Activated B cell treated with CpG ODN at 0.5 μM for 24 hours (primary cell): ENCODE measurements at regions of chr2 and their contacts with region 1.

Region 1: DNA sequence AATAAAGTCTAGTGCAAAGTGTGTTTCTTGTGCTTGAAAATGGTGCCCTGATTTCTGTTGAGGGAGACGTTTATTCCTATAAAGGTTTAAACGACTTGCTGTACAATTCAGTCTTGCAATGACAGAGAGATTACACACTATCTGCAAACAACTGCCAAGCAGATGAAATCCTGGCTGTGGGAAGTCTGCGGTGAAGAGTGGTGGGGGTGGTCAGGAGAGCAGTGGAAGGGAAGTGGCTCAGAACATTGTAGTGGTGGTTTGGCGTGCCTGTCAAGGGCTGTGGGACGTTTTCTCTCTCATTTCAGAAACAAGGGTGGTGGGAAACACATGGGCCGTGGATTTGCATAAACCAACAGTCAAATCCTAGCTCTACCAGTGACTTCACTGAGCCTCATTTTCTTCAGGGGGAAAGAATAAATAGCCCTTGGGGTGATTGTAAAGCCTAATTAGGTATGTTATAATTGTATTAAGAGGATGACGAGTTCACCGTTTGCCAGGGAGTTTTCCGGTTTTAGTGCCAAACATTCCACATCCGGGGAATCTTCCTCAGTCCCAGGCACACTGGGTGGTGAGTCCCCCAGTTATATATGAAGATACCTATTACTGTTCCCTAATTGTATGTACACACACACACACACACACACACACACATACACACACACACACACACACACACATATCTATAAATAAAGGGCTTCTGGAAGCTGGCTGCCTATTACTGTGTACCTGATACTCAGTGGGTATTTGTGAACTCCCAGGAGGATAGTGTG is 115.0 kb downstream of the SPTBN1 start:
- DNase-seq: no peak
- ATAC-seq: peak; percentile 49
- H3K4me3 Mint-ChIP-seq: peak overlapping the region; percentile 52
- H3K27ac Mint-ChIP-seq: peak overlapping the region; percentile 94
- H3K4me1 Mint-ChIP-seq: peaks cover 96% of the 10 kb centered on the region
- H3K27me3 Mint-ChIP-seq: no peaks in the 10 kb centered on the region
- CTCF ChIP-seq: no peak

Region 2: DNA sequence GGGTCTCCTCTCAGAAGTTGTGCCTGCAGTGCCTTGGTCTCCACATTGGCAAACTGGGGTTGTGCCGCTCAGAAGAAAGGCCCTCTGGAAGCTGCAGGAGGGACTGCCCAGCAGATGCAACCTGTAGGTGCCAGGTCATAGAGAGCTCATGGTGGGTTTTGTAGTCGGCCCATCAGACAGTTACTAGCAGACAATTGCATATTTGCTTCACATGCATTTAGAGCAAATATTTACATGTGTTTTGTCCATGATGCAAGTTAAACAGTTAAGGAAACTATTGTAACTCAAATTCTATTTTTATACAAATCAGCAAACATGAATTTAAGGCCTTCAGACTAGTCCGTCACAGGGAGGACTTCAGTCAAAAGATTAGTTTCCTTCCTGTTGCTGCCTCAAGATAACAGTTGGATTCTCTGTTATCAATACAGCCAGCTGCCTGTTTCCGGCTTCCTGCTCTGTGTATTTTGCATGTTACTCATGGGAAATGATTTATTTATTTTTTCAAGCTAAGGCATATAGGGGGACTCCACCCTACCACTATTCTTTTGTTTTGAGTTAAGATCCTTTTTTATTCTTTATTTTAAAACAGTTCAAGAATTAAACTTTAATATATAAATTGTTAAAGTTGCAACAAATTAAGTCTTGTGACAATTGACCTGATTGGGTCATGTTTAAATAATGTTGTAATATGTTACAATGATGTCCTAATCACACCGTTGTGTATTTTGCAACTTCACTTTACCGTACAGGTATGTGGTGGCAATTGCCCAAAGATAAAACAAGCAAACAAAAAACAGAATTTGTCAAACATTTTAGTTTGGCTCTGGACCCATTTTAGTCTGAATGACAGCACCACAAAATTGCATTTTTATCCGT is 18.5 kb after region 1 on chr2:
- CTCF ChIA-PET with region 1: no interaction called
- POLR2A ChIA-PET with region 1: interaction called, 21 read pairs
- intact Hi-C with region 1: loop called (anchors 1 kb)
- DNase-seq: no peak
- ATAC-seq: peak; percentile 62
- H3K4me3 Mint-ChIP-seq: peak overlapping the region; percentile 24
- H3K27ac Mint-ChIP-seq: peak overlapping the region; percentile 88
- H3K4me1 Mint-ChIP-seq: peaks cover 95% of the 10 kb centered on the region
- H3K27me3 Mint-ChIP-seq: no peaks in the 10 kb centered on the region
- CTCF ChIP-seq: no peak